Activated CD4-positive, alpha-beta memory T cell treated with anti-CD3 and anti-CD28 coated beads for 36 hours (primary cell): ENCODE measurements at regions of chr18 and their contacts with region 1.

Region 1: GRCh38 chr18:38563396-38563980 is 997.9 kb upstream of the CELF4 start:
- DNase-seq: no peak
- H3K4me3 Mint-ChIP-seq: no peak overlapping the region
- H3K27ac Mint-ChIP-seq: no peak overlapping the region
- H3K4me1 Mint-ChIP-seq: no peaks in the 10 kb centered on the region
- H3K27me3 Mint-ChIP-seq: no peaks in the 10 kb centered on the region

Region 2: DNA sequence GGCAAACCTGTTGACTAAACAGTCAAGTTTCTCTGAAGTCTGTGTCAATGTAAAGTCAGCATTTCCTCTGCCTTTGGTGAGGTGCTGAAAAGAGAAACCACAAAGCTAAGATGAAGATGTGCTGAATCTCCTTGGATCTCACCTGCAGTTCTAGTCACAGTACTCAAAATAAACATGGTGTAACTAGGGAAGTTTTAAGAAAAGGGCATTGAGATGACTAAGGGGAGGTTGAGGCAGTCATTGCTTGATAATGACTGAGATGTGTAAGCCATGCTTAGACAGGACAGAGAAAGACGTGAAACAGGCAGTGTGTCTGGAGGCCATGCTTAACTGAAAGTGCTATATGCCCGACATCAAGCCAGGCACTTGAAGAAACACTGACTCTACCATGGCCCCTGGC is 12.2 kb after region 1 on chr18:
- CTCF ChIA-PET with region 1: no interaction called
- POLR2A ChIA-PET with region 1: no interaction called
- intact Hi-C with region 1: loop called (anchors 1 kb)
- DNase-seq: peak; percentile 13
- H3K4me3 Mint-ChIP-seq: peak overlapping the region; percentile 45
- H3K27ac Mint-ChIP-seq: peak overlapping the region; percentile 75
- H3K4me1 Mint-ChIP-seq: peaks cover 19% of the 10 kb centered on the region
- H3K27me3 Mint-ChIP-seq: no peaks in the 10 kb centered on the region

Region 3: GRCh38 chr18:38698088-38698487 is 134.6 kb after region 1 on chr18:
- CTCF ChIA-PET with region 1: no interaction called
- POLR2A ChIA-PET with region 1: no interaction called
- intact Hi-C with region 1: no loop called
- DNase-seq: no peak
- H3K4me3 Mint-ChIP-seq: no peak overlapping the region
- H3K27ac Mint-ChIP-seq: no peak overlapping the region
- H3K4me1 Mint-ChIP-seq: no peaks in the 10 kb centered on the region
- H3K27me3 Mint-ChIP-seq: no peaks in the 10 kb centered on the region